Prostate gland (tissue), 2 donors: ENCODE measurements at regions of chr11 and their contacts with region 1.

Region 1: GRCh38 chr11:113875234-113876073 is at the start of gene USP28:
- DNase-seq: peak; percentile 96
- H3K4me3 ChIP-seq: peak within 1 kb of the TSS; percentile 69 to 74
- H3K27ac ChIP-seq: peak within 1 kb of the TSS; percentile 79 to 88
- H3K4me1 ChIP-seq: no peaks in the 10 kb centered on the region
- H3K27me3 ChIP-seq: no peaks in the 10 kb centered on the region
- CTCF ChIP-seq: peak in 1 of 4 experiments; percentile 14
- POLR2A ChIP-seq: peak; percentile 71
- total RNA-seq, gene USP28: 28.9 to 31.5 TPM

Region 2: GRCh38 chr11:113587308-113587739 is 288.1 kb before region 1 on chr11:
- intact Hi-C with region 1: no loop called
- DNase-seq: no peak
- H3K4me3 ChIP-seq: no peak overlapping the region
- H3K27ac ChIP-seq: no peak overlapping the region
- H3K4me1 ChIP-seq: no peaks in the 10 kb centered on the region
- H3K27me3 ChIP-seq: no peaks in the 10 kb centered on the region
- CTCF ChIP-seq: no peak
- POLR2A ChIP-seq: no peak

Region 3: GRCh38 chr11:113655771-113656170 is 219.7 kb before region 1 on chr11:
- intact Hi-C with region 1: no loop called
- DNase-seq: no peak
- H3K4me3 ChIP-seq: no peak overlapping the region
- H3K27ac ChIP-seq: no peak overlapping the region
- H3K4me1 ChIP-seq: no peaks in the 10 kb centered on the region
- H3K27me3 ChIP-seq: no peaks in the 10 kb centered on the region
- CTCF ChIP-seq: no peak
- POLR2A ChIP-seq: no peak

Region 4: DNA sequence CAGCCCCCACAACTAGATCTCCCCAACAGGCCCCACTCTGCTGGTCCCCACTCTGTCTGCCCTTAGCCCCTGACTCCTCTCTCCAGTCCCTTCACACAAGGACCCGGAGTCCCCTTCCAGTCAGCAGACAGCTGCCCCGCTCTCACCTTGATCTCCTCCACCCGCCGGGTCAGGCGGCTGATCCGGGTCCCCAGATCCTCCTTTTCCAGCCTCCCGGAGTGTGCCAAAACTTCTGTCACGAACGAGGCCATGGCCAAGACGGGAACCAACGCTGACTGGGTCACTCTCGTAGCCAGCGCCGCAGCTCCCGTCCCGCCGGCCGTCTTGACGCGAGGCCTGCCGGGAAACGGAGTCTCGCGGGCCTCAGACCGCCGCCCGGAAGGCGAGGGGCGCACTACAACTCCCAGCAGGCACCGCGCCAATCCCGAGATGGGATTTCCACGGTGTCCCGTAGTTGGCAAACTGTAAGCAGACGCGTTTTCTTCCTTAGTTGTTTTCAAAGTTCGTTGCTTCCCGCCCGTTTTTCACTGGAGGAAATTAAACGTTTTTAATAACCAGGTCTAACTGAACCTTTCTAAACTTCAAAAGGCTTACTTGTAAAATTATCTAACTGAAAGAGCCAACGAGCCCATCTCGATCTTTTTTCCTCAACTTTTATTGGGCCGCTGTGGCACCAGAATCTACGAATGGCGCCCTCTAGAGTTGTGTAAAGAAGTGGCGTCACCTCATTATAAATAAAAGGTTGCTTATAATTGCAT is 101.9 kb before region 1 on chr11 and contains the start of gene ZW10:
- intact Hi-C with region 1: loop called (anchors 10 kb)
- DNase-seq: peak; percentile 96
- H3K4me3 ChIP-seq: peak within 1 kb of the TSS; percentile 73 to 77
- H3K27ac ChIP-seq: peak within 1 kb of the TSS; percentile 77 to 82
- H3K4me1 ChIP-seq: no peaks in the 10 kb centered on the region
- H3K27me3 ChIP-seq: no peaks in the 10 kb centered on the region
- CTCF ChIP-seq: peak; percentile 75 to 89 (median 80)
- POLR2A ChIP-seq: peak; percentile 61
- total RNA-seq, gene ZW10: 10.2 to 11.6 TPM